Activated CD4-positive, alpha-beta T cell treated with anti-CD3 and anti-CD28 coated beads, Interleukin-2, amount 10 ng/mL, durations not matched to agents 24 days and 14 days (primary cell): ENCODE measurements at regions of chr10 and their contacts with region 1.

Region 1: DNA sequence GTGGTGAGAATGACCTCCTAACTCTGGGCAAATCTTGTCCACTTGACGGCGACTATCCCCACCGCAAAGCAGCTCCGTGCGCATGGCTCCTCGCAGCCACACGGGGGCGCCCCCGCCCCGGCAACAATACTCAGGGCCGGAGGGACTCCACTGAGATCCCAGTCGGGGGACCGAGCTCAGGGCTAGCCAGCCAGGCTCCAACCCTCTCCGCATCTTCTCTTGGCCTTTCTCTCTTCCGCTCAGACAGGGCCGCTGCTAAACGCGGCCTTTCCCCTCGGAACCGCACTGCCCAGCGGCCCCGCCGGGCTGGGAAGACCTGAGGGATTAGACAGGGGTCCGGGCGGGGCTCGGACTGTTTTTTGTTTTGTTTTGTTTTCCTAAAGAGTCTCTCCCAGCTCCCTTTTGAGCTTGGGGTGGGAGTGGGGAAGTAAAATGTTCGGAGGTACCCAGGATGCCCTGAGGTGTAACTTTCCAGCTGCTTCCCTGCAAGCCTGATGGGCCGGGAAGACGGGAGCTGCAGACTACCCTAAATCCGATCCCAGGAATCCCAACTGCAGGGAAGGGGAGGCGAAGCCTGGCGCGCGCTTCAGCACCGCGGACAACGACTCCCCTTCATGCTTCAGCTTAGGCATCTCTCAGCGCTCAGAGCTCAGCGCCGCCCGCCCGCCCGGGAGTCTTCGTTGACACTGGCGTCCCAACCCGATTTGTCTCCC is 2.7 kb downstream of the KCNIP2 start:
- DNase-seq: peak; percentile 94
- H3K4me3 Mint-ChIP-seq: peak overlapping the region; percentile 86
- H3K27ac Mint-ChIP-seq: peak overlapping the region; percentile 62
- H3K4me1 Mint-ChIP-seq: peaks cover 38% of the 10 kb centered on the region
- H3K27me3 Mint-ChIP-seq: peaks cover 10% of the 10 kb centered on the region

Region 2: GRCh38 chr10:101889256-101890210 is 48.6 kb after region 1 on chr10:
- intact Hi-C with region 1: loop called (anchors 1 kb)
- DNase-seq: peak; percentile 92
- H3K4me3 Mint-ChIP-seq: no peak overlapping the region
- H3K27ac Mint-ChIP-seq: no peak overlapping the region
- H3K4me1 Mint-ChIP-seq: no peaks in the 10 kb centered on the region
- H3K27me3 Mint-ChIP-seq: no peaks in the 10 kb centered on the region

Region 3: GRCh38 chr10:102009801-102010425 is 169.0 kb after region 1 on chr10:
- intact Hi-C with region 1: loop called (anchors 1 kb)
- DNase-seq: peak; percentile 85
- H3K4me3 Mint-ChIP-seq: no peak overlapping the region
- H3K27ac Mint-ChIP-seq: no peak overlapping the region
- H3K4me1 Mint-ChIP-seq: peaks cover 2% of the 10 kb centered on the region
- H3K27me3 Mint-ChIP-seq: no peaks in the 10 kb centered on the region

Region 4: DNA sequence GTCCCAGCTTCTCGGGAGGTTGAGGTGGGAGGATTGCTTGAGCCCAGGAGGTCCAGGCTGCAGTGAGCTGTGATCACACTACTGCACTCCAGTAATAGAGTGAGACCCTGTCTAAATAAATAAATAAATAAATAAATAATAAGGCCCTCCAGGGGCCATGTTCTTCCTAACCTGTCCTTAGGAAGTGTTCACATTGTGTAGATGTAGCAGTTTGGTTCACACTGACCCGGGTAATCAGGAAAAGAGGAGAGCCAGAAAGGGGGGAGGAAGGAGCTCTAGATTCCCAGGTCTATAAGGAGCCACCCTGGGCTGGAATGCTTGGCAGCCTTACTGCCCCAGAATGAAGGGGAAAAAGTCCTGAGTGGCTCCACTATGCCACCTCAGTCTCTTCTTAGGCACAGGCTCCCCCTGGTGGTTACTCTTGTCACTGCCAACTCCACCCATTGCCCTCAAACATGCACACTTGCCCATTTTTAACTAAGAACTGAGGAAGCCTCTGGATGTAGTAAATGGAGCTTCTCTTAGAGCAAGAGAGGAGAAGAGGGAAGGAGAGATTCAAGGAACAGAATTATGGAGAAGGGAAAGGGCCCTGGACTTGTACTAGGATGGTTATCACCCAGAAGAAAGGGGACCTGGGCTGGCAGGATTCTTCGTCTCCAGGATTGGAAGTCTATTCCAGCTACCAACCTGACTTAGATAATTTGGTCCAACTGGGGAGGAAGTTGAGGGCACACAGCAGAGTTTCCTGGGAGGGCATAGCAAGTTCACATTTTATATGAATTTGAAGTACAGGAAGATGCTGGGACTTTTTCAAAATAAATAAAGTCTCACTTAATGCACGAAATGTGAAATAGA is 232.0 kb after region 1 on chr10:
- intact Hi-C with region 1: loop called (anchors 2 kb)
- DNase-seq: peak; percentile 94
- H3K4me3 Mint-ChIP-seq: no peak overlapping the region
- H3K27ac Mint-ChIP-seq: no peak overlapping the region
- H3K4me1 Mint-ChIP-seq: peaks cover 2% of the 10 kb centered on the region
- H3K27me3 Mint-ChIP-seq: no peaks in the 10 kb centered on the region

Region 5: DNA sequence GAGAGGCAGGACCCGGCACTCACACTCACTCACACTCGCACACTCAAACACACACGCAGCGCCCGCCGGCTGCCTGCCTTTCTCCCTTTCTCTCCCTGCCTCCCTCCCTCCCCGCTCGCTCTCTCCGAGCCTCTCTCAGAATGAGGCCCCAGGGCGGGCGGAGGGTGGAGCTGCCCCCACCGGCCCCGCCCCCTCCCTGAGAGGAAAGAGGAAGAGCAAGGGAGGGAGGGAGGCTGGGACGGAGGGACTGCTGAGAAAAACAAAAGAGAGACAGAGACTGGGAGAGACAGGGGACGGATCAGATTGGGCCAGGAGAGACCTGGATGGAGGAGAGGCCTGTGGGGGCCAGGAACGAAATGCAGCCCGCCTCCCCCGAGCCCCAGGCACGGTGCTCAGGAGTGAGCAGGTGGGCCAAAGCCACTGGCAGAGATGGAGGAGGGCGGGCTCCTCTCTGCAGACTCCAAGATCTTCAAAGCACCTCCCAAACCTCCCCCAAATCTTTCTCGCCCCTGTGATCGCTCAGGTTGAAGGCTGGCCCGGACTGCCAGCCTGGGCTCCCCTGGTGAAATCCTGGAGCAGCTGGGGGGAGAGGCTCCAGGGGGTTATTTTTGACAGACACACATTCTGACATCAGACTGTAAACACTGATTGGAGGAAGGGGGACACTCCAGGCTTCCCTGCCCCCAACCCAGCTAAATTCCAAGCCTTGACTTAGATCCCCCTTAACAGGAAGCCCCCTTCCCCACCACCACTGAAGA is 274.1 kb after region 1 on chr10:
- intact Hi-C with region 1: loop called (anchors 5 kb)
- DNase-seq: peak; percentile 94
- H3K4me3 Mint-ChIP-seq: peak overlapping the region; percentile 94
- H3K27ac Mint-ChIP-seq: peak overlapping the region; percentile 98
- H3K4me1 Mint-ChIP-seq: peaks cover 53% of the 10 kb centered on the region
- H3K27me3 Mint-ChIP-seq: no peaks in the 10 kb centered on the region

Region 6: GRCh38 chr10:102540023-102540422 is 699.1 kb after region 1 on chr10:
- intact Hi-C with region 1: no loop called
- DNase-seq: no peak
- H3K4me3 Mint-ChIP-seq: no peak overlapping the region
- H3K27ac Mint-ChIP-seq: no peak overlapping the region
- H3K4me1 Mint-ChIP-seq: peaks cover 12% of the 10 kb centered on the region
- H3K27me3 Mint-ChIP-seq: no peaks in the 10 kb centered on the region